H1 (cell line): ENCODE measurements at regions of chr14 and their contacts with region 1.

Region 1: GRCh38 chr14:73825551-73826188 is 26.0 kb upstream of the PTGR2 start:
- DNase-seq: peak; percentile 27 to 73
- H3K4me3 ChIP-seq: no peak overlapping the region
- H3K27ac ChIP-seq: no peak overlapping the region
- H3K4me1 ChIP-seq: no peaks in the 10 kb centered on the region
- H3K27me3 ChIP-seq: no peaks in the 10 kb centered on the region; a peak in 1 of 7 replicates
- CTCF ChIP-seq: peak; percentile 70 to 85 (median 79)
- EP300 ChIP-seq: no peak
- POLR2A ChIP-seq: no peak
- RAD21 ChIP-seq: peak; percentile 79 to 87

Region 2: DNA sequence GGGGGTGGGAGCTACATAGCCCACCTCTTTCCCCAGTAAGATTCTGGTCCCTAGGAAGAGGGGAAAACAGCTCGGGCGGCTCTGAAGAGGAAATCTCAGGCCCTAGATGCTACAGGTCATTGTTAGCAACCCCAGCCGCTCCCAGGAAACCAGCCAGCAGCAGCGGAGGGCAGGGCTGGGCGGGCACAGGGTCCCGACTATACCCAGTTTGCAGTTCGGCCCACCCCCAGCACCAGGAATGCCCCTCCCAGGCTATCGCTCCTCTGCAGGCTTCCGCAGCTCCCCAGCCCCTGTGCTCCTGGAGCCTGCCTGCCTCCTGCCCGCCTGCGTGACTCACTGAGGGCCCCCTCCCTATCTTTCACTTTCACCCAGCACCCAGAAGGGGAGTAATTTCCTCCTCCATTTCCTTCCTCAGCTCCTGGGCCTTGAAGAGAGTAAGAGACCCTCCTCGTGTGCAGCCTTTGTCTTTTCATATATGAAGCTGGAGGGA is 84.2 kb before region 1 on chr14:
- CTCF ChIA-PET with region 1: interaction called, 58 read pairs
- POLR2A ChIA-PET with region 1: no interaction called
- DNase-seq: peak; percentile 47 to 74
- H3K4me3 ChIP-seq: peak overlapping the region in 3 of 4 experiments; percentile 1 to 43 (median 19); a peak in 4 of 8 replicates
- H3K27ac ChIP-seq: peak overlapping the region; percentile 31; the same call in 1 of the 2 replicates
- H3K4me1 ChIP-seq: peaks cover 6 to 41% (median 30%) of the 10 kb centered on the region in 4 experiments
- H3K27me3 ChIP-seq: no peaks in the 10 kb centered on the region
- CTCF ChIP-seq: no peak
- EP300 ChIP-seq: no peak
- POLR2A ChIP-seq: no peak
- RAD21 ChIP-seq: no peak

Region 3: GRCh38 chr14:73753959-73754882 is 71.4 kb before region 1 on chr14:
- CTCF ChIA-PET with region 1: interaction called, 11 read pairs
- POLR2A ChIA-PET with region 1: no interaction called
- DNase-seq: no peak
- H3K4me3 ChIP-seq: no peak overlapping the region
- H3K27ac ChIP-seq: no peak overlapping the region
- H3K4me1 ChIP-seq: peaks cover 4 to 25% (median 8%) of the 10 kb centered on the region in 4 experiments
- H3K27me3 ChIP-seq: peaks cover 0 to 9% (median 8%) of the 10 kb centered on the region in 4 experiments; a peak in 5 of 7 replicates
- CTCF ChIP-seq: no peak
- EP300 ChIP-seq: no peak
- POLR2A ChIP-seq: no peak
- RAD21 ChIP-seq: no peak

Region 4: GRCh38 chr14:73771848-73772638 is 53.6 kb before region 1 on chr14:
- CTCF ChIA-PET with region 1: interaction called, 14 read pairs
- POLR2A ChIA-PET with region 1: no interaction called
- DNase-seq: peak; percentile 43 to 71
- H3K4me3 ChIP-seq: peak overlapping the region in 1 of 4 experiments; percentile 4; a peak in 1 of 8 replicates
- H3K27ac ChIP-seq: no peak overlapping the region
- H3K4me1 ChIP-seq: peaks cover 5 to 22% (median 8%) of the 10 kb centered on the region in 4 experiments; a peak in 5 of 7 replicates
- H3K27me3 ChIP-seq: peaks cover 0 to 28% (median 12%) of the 10 kb centered on the region in 4 experiments; a peak in 4 of 7 replicates
- CTCF ChIP-seq: no peak
- EP300 ChIP-seq: no peak; a peak in 1 of 3 replicates
- POLR2A ChIP-seq: no peak
- RAD21 ChIP-seq: no peak

Region 5: DNA sequence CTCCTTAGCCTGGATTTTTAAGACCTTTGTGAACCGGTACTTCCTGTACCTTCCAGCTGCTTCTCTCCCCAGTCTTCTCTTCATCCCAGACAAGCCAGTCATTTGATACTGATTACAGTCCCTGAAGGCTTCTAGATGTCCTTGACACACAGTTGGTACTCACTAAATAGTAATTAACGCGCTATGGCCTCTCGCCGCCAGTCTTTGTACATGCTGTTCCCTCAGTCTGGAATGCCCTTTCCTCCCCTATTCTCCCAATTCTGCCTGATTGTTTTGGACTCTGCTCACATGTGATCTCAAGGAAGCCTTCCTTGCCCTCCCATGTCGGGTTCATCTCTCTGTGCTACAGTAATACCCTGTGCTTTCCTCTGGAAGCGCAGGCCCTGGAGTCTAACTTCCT is 24.6 kb before region 1 on chr14:
- CTCF ChIA-PET with region 1: interaction called, 13 read pairs
- POLR2A ChIA-PET with region 1: no interaction called
- DNase-seq: no peak
- H3K4me3 ChIP-seq: no peak overlapping the region
- H3K27ac ChIP-seq: no peak overlapping the region
- H3K4me1 ChIP-seq: no peaks in the 10 kb centered on the region
- H3K27me3 ChIP-seq: peaks cover 0 to 2% (median 0%) of the 10 kb centered on the region in 4 experiments; a peak in 1 of 7 replicates
- CTCF ChIP-seq: no peak
- EP300 ChIP-seq: no peak
- POLR2A ChIP-seq: no peak
- RAD21 ChIP-seq: no peak

Region 6: DNA sequence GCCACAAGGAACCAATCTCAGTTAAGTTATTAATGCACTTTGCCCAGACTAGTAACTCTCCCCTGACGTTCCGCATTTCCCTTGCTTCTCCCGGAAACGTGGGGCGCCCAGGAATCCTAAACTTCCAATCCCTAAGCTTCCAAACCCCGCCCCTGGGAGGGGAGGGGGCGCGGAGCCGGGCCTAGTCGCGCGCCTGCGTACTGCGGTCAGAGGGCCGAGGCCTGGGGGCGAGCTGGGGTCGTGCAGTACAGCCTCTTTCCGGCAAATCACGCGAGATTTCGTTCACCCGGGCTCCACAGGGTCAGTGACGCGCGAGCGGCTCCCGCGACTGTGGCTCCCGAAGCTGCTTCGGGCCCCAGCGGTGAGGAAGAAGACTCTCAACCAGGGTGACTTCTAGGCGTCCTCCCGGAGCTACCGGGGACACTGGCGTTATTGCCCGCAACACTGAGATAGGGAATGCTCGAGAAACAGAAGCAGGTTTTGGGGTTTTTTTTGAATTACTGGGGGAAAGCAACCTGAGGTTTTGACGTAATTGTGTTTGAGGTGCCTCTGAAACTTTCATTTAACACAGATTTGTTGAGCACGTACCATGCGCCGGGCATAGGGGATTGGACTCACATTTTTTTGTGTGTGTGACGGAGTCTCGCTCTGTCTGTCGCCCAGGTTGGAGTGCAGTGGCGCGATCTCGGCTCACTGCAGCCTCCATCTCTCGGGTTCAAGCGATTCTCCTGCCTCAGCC is 26.1 kb after region 1 on chr14 and contains the start of gene PTGR2:
- CTCF ChIA-PET with region 1: interaction called, 15 read pairs
- POLR2A ChIA-PET with region 1: interaction called, 4 read pairs
- DNase-seq: peak; percentile 91 to 98
- H3K4me3 ChIP-seq: peak within 1 kb of the TSS; percentile 77 to 94 (median 90)
- H3K27ac ChIP-seq: peak within 1 kb of the TSS; percentile 88
- H3K4me1 ChIP-seq: peaks cover 0 to 6% (median 4%) of the 10 kb centered on the region in 4 experiments; a peak in 3 of 7 replicates
- H3K27me3 ChIP-seq: no peaks in the 10 kb centered on the region
- CTCF ChIP-seq: peak in 2 of 3 experiments; percentile 0 to 11; a peak in 1 of 4 replicates
- EP300 ChIP-seq: no peak
- POLR2A ChIP-seq: peak; percentile 68 to 90
- RAD21 ChIP-seq: no peak
- total RNA-seq, gene PTGR2: 14.0 and 17.5 TPM in 2 replicates